ENCODE measurements at regions of chr5 and their contacts with region 1.

Region 1: GRCh38 chr5:6377905-6378765 is at the start of gene MED10:
- DNase-seq: peak; percentile 98
- ATAC-seq: peak; percentile 96
- H3K4me3 Mint-ChIP-seq: peak within 1 kb of the TSS; percentile 96
- H3K27ac Mint-ChIP-seq: peak within 1 kb of the TSS; percentile 97
- H3K4me1 Mint-ChIP-seq: peaks cover 38% of the 10 kb centered on the region
- H3K27me3 Mint-ChIP-seq: no peaks in the 10 kb centered on the region
- total RNA-seq, gene MED10: 40.4 to 50.8 TPM

Region 2: GRCh38 chr5:5492087-5492933 is 885.8 kb before region 1 on chr5:
- CTCF ChIA-PET with region 1: no interaction called
- POLR2A ChIA-PET with region 1: no interaction called
- intact Hi-C with region 1: loop called (anchors 5 to 10 kb)
- DNase-seq: peak; percentile 52
- ATAC-seq: peak; percentile 63
- H3K4me3 Mint-ChIP-seq: no peak overlapping the region
- H3K27ac Mint-ChIP-seq: no peak overlapping the region
- H3K4me1 Mint-ChIP-seq: peaks cover 13% of the 10 kb centered on the region
- H3K27me3 Mint-ChIP-seq: peaks cover 5% of the 10 kb centered on the region

Region 3: DNA sequence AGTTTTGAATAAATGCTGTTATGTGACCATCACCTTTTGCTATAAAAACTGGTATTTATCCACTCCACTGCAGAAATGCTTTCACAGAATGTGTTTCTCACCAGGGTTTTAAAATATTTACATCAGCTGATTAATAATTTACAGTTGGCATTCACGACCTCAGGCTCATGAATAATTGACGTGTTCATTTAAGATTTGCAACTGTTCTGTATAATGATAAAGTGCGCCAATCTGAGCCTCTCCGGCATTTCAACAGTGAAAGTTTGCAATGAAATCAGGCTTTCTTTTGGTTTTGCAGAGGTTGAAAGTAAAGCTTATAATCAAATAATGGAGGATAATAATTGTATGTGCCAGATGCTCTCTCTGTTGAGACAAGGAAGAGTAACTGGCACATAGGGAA is 520.7 kb before region 1 on chr5:
- CTCF ChIA-PET with region 1: no interaction called
- POLR2A ChIA-PET with region 1: no interaction called
- intact Hi-C with region 1: no loop called
- DNase-seq: no peak
- ATAC-seq: no peak
- H3K4me3 Mint-ChIP-seq: no peak overlapping the region
- H3K27ac Mint-ChIP-seq: no peak overlapping the region
- H3K4me1 Mint-ChIP-seq: no peaks in the 10 kb centered on the region
- H3K27me3 Mint-ChIP-seq: no peaks in the 10 kb centered on the region

Region 4: GRCh38 chr5:6448622-6449464 is 70.7 kb after region 1 on chr5 and contains the start of gene UBE2QL1:
- CTCF ChIA-PET with region 1: no interaction called
- POLR2A ChIA-PET with region 1: no interaction called
- intact Hi-C with region 1: loop called in 1 of 2 experiments (anchors 2 kb)
- DNase-seq: peak; percentile 38
- ATAC-seq: peak; percentile 61
- H3K4me3 Mint-ChIP-seq: peak within 1 kb of the TSS; percentile 61
- H3K27ac Mint-ChIP-seq: peak within 1 kb of the TSS; percentile 19
- H3K4me1 Mint-ChIP-seq: peaks cover 12% of the 10 kb centered on the region
- H3K27me3 Mint-ChIP-seq: peaks cover 40% of the 10 kb centered on the region
- total RNA-seq, gene UBE2QL1: not detected

Region 5: DNA sequence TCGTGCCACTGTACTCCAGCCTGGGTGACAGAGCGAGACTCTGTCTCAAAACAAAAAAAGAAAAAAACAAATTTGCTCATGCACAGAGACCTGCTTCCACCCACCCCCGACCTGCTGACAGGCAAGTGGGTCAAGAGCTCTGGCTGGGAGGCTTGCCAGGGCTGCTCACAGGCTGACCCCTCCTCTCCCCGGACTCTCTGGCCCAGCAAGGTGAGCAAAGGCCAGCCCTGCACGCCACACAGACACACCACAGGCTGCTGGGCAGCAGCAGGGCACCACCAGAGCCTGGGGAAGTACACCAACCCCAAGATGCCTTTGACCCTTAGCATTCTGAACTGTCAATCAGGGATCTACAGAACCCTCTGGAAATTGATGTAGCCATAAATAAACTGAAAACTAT is 225.5 kb after region 1 on chr5:
- CTCF ChIA-PET with region 1: no interaction called
- POLR2A ChIA-PET with region 1: no interaction called
- intact Hi-C with region 1: loop called in 1 of 2 experiments (anchors 10 kb)
- DNase-seq: no peak
- ATAC-seq: no peak
- H3K4me3 Mint-ChIP-seq: no peak overlapping the region
- H3K27ac Mint-ChIP-seq: no peak overlapping the region
- H3K4me1 Mint-ChIP-seq: no peaks in the 10 kb centered on the region
- H3K27me3 Mint-ChIP-seq: no peaks in the 10 kb centered on the region

Region 6: DNA sequence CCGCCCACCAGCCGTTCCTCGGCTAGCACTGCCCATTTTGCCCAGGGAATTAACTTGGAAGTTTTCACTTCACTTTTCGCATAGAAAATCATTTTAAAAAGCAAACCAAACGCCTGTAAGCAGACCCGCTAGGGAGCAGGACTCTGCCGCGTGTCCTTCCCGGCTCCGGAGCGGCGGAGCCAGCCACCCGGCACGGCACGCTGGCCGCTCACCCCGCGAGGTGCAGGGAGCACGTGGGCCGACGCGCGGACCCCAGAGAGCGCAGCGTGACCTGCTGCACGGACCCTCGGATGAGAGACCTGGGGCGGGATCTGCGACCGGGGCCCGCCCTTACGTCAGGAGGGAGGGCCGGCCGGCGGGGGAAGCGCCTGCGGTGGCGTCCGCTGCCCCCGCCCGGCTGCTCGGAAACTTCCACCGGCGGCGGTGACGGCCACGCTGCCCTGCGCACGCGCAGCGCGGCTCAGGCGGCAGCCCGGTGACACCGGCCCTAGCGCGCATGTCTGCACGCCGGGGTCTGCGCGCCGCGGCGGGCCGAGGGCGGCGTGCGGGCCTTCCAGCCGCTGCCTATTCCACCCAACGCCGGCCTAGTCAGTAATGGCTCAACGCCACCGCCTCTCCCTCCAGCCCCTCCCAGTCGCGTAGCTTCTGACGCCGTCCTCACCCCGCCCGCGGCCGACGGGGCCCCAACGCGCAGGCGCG is 334.6 kb after region 1 on chr5:
- CTCF ChIA-PET with region 1: no interaction called
- POLR2A ChIA-PET with region 1: no interaction called
- intact Hi-C with region 1: loop called (anchors 1 kb)
- DNase-seq: peak; percentile 98
- ATAC-seq: peak; percentile 84
- H3K4me3 Mint-ChIP-seq: peak overlapping the region; percentile 78
- H3K27ac Mint-ChIP-seq: peak overlapping the region; percentile 95
- H3K4me1 Mint-ChIP-seq: peaks cover 30% of the 10 kb centered on the region
- H3K27me3 Mint-ChIP-seq: no peaks in the 10 kb centered on the region

Region 7: GRCh38 chr5:6745706-6746222 is 367.6 kb after region 1 on chr5:
- CTCF ChIA-PET with region 1: no interaction called
- POLR2A ChIA-PET with region 1: no interaction called
- intact Hi-C with region 1: loop called in 1 of 2 experiments (anchors 10 kb)
- DNase-seq: no peak
- ATAC-seq: peak; percentile 87
- H3K4me3 Mint-ChIP-seq: no peak overlapping the region
- H3K27ac Mint-ChIP-seq: no peak overlapping the region
- H3K4me1 Mint-ChIP-seq: peaks cover 5% of the 10 kb centered on the region
- H3K27me3 Mint-ChIP-seq: no peaks in the 10 kb centered on the region